Activated B cell treated with CpG ODN at 0.5 μM for 24 hours (primary cell): ENCODE measurements at regions of chr15 and their contacts with region 1.

Region 1: GRCh38 chr15:99433034-99433756 is 132.6 kb upstream of the MEF2A start:
- DNase-seq: peak; percentile 30
- ATAC-seq: peak; percentile 83
- H3K4me3 Mint-ChIP-seq: peak overlapping the region; percentile 28
- H3K27ac Mint-ChIP-seq: peak overlapping the region; percentile 70
- H3K4me1 Mint-ChIP-seq: peaks cover 57% of the 10 kb centered on the region
- H3K27me3 Mint-ChIP-seq: no peaks in the 10 kb centered on the region
- CTCF ChIP-seq: no peak

Region 2: GRCh38 chr15:99305761-99306505 is 127.3 kb before region 1 on chr15:
- CTCF ChIA-PET with region 1: no interaction called
- POLR2A ChIA-PET with region 1: no interaction called
- intact Hi-C with region 1: no loop called
- DNase-seq: no peak
- ATAC-seq: no peak
- H3K4me3 Mint-ChIP-seq: no peak overlapping the region
- H3K27ac Mint-ChIP-seq: no peak overlapping the region
- H3K4me1 Mint-ChIP-seq: no peaks in the 10 kb centered on the region
- H3K27me3 Mint-ChIP-seq: no peaks in the 10 kb centered on the region
- CTCF ChIP-seq: no peak

Region 3: DNA sequence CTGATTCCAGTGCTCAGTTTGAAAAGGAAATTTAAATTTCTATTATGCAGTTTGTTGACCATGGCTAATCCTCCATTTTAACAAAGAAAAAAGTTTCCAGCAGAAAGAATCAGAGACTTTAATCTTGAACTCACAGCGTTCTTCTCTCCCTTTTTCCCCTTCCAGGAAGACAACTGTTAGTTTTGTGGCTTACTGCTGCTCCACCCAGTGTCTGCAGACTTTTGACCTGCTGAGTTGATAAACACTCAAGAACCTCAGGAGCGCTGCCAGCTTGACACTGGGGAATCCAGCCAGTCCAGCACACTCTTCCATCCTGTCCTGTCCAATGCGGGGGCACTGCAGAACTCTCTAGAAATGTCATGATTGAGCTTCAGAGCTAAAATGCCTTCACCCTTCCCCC is 47.3 kb before region 1 on chr15:
- CTCF ChIA-PET with region 1: no interaction called
- POLR2A ChIA-PET with region 1: no interaction called
- intact Hi-C with region 1: loop called (anchors 5 kb)
- DNase-seq: no peak
- ATAC-seq: no peak
- H3K4me3 Mint-ChIP-seq: no peak overlapping the region
- H3K27ac Mint-ChIP-seq: no peak overlapping the region
- H3K4me1 Mint-ChIP-seq: peaks cover 7% of the 10 kb centered on the region
- H3K27me3 Mint-ChIP-seq: no peaks in the 10 kb centered on the region
- CTCF ChIP-seq: no peak